ENCODE measurements at regions of chr17 and their contacts with region 1.

Region 1: GRCh38 chr17:4220655-4221054 is 43.1 kb downstream of the ANKFY1 start:
- DNase-seq: no peak
- H3K4me3 ChIP-seq: no peak overlapping the region
- CTCF ChIP-seq: no peak

Region 2: GRCh38 chr17:4175921-4176807 is 44.5 kb before region 1 on chr17:
- CTCF ChIA-PET with region 1: no interaction called
- POLR2A ChIA-PET with region 1: no interaction called
- DNase-seq: no peak
- H3K4me3 ChIP-seq: no peak overlapping the region
- CTCF ChIP-seq: no peak

Region 3: DNA sequence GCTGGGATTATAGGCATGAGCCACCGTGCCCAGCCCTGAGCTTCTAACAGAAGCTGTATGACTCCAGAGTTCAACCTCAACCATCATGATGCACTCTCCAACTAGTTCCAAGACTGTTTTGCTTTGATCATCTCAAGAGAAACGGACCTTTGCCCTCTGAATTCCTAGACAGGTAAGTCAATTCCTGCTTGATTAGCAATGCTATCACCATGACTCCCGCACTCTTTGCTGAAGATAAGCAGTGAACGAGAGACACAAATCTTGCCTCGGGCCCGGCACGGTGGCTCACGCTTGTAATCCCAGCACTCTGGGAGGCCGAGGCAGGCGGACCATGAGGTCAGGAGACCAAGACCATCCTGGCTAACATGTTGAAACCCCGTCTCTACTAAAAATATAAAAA is 20.9 kb after region 1 on chr17:
- CTCF ChIA-PET with region 1: interaction called, 70 read pairs
- POLR2A ChIA-PET with region 1: no interaction called
- DNase-seq: no peak
- H3K4me3 ChIP-seq: no peak overlapping the region
- CTCF ChIP-seq: no peak

Region 4: DNA sequence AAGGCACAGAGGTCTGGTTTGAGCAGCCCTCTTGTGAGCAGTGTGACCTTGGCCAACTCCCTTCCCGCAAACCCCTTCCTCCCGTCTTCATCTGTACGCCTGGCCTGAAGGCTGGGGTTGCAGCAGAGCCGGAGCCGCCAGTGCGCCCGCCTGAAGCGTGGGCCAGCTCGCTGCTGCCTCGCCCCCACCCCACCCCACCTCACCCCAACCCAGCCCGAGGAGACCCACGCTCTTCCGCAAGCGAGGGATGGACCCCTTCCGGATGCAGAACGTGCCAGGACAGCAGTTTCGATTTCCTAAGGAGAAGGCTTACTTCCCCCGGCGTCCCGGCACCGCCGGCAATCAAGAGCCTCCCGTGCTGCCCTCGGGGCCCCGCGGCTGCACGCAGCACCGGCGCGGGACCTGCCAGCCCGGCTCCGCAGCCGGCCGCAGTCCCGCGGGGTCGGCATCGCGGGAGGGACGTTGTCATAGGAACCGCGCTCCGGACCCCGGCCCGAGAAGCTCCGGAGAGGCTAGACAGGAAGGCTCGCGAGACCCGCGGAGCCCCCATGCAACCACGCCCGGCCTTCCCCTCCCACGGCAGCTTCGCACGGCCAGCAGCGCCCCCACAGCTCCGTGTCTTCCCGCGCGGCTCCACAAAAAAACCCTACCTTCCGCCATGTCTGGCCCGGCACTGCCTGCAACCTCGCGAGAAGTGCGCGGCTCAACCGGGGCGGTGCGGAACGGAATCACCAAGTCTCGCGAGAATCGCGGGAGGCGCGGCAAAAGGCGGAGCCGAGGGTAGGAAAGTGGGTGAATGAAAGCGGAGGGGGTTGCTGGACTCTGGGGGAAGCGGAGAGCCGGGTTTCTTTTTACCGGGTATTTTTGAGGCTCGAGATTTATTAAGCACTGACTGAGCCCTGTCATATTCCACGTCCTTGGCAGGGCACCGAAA is 42.9 kb after region 1 on chr17 and contains the start of gene ANKFY1:
- CTCF ChIA-PET with region 1: interaction called, 14 read pairs
- POLR2A ChIA-PET with region 1: no interaction called
- DNase-seq: peak; percentile 60
- H3K4me3 ChIP-seq: peak within 1 kb of the TSS; percentile 91
- CTCF ChIP-seq: peak; percentile 17

Region 5: DNA sequence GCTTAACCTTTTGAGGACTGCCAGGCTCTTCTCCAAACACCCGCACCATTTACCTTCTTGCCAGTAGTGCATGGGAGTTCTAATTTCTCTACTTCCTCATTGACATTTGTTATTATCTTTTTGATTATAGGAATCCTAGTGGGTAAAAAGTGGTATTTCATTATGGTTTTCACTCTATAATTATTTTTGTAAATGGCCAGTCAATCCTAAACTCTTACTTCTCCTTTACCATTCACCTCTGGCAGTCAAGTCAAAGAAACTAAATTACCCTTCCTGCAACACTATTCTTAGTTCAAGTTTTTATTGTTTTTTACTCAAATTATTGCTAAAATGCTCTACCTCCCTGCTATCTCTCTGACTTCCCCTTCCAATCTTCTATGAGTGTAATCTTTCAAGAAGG is 72.9 kb after region 1 on chr17:
- CTCF ChIA-PET with region 1: interaction called, 16 read pairs
- POLR2A ChIA-PET with region 1: no interaction called
- DNase-seq: no peak
- H3K4me3 ChIP-seq: no peak overlapping the region
- CTCF ChIP-seq: no peak

Region 6: GRCh38 chr17:4412933-4413831 is 192.5 kb after region 1 on chr17:
- CTCF ChIA-PET with region 1: interaction called, 223 read pairs
- POLR2A ChIA-PET with region 1: no interaction called
- DNase-seq: peak; percentile 40
- H3K4me3 ChIP-seq: no peak overlapping the region; the same call in 1 of the 2 replicates
- CTCF ChIP-seq: peak; percentile 95

Measured in AG04449 (cell line).